OCI-LY7 (cell line): ENCODE measurements at regions of chr20 and their contacts with region 1.

Region 1: GRCh38 chr20:9978397-9979004 is 56.3 kb upstream of the ANKEF1 start:
- DNase-seq: peak; percentile 72
- H3K4me3 ChIP-seq: no peak overlapping the region
- H3K27ac ChIP-seq: no peak overlapping the region
- H3K4me1 ChIP-seq: no peaks in the 10 kb centered on the region
- CTCF ChIP-seq: peak; percentile 89

Region 2: DNA sequence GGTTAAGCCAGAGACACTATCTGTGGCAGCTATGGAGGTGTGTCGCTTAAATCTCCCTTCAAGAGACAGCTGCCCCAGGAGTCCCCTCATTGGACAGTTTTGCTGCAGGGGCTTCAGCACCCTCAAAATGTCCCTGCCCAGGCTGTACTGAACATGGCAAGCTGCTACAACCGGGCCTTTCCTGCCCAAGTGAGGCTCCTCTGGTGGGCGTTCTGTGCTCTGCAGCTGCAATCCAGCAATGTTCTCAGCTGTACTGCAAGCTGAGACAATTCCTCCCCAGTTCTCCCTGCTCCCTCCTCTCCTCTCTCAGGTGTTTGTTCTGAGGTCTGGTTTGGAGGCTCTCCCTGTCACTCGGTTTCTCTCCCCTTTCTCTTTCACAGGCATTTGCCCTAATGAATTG is 654.9 kb before region 1 on chr20:
- CTCF ChIA-PET with region 1: no interaction called
- POLR2A ChIA-PET with region 1: no interaction called
- intact Hi-C with region 1: no loop called
- DNase-seq: peak; percentile 1
- H3K4me3 ChIP-seq: no peak overlapping the region
- H3K27ac ChIP-seq: no peak overlapping the region
- H3K4me1 ChIP-seq: no peaks in the 10 kb centered on the region
- CTCF ChIP-seq: 0 out of 2 replicates have a peak, but pooled peaks have one; percentile 24

Region 3: DNA sequence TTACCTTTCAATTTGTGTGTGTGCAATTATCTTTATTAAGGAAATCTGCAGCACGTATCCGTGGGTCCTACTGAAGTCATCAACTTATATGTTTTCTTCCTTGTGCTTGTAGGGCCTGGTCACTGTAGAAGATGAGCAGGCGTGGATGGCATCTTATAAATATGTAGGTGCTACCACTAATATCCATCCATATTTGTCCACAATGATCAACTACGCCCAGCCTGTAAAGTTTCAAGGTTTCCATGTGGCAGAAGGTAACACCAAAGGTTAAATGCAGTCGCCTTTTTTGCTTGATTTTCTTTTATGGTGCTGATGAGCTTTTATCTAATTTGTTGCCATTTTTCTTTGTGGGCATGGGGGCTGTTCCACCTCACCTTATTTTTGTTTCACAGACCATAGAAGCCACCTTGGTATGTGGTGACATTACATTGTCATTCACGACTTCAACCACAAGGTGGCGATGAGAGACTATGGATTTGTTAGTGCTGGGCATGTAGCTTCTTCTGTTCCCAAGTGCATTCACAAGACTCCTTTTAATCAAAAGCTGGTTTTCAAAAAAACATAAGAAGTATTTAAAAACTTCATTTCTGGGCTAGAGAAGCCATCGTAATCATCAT is 570.6 kb before region 1 on chr20:
- CTCF ChIA-PET with region 1: no interaction called
- POLR2A ChIA-PET with region 1: interaction called, 3 read pairs
- intact Hi-C with region 1: loop called (anchors 10 kb)
- DNase-seq: peak; percentile 61
- H3K4me3 ChIP-seq: no peak overlapping the region
- H3K27ac ChIP-seq: no peak overlapping the region
- H3K4me1 ChIP-seq: no peaks in the 10 kb centered on the region
- CTCF ChIP-seq: peak; percentile 95

Region 4: GRCh38 chr20:10090588-10091166 is 112.2 kb after region 1 on chr20:
- CTCF ChIA-PET with region 1: interaction called, 3 read pairs
- POLR2A ChIA-PET with region 1: interaction called, 3 read pairs
- intact Hi-C with region 1: loop called (anchors 1 kb)
- DNase-seq: peak; percentile 49
- H3K4me3 ChIP-seq: no peak overlapping the region
- H3K27ac ChIP-seq: no peak overlapping the region
- H3K4me1 ChIP-seq: no peaks in the 10 kb centered on the region
- CTCF ChIP-seq: peak; percentile 82

Region 5: DNA sequence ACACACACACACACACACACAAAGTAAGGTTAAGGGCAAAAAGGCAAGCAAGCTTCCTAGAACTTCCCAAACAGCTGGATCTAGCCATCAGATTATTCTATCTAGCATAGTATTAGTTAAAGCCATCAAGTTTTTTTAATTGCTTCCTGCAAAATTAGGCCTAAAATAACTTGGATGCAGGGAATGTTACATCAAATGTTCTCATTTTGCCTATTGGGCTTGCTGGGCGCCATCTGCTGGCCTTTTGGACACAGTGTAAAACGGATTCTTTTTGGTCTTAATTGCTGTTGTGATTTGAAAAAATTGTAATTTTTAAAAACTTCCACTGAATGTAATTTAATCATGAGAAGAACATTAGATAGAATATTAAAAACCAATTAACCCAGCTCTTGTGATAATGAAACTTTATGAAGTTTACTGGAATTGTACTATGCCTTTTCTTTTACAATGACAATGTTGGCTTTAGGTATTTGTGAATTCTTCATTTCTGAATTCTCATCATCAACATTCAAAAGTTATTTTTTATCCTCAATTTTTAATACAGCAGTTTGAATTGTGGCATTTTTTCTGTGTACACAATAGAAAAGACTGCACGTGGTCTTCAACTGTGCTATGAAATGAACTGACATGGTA is 448.7 kb after region 1 on chr20:
- CTCF ChIA-PET with region 1: interaction called, 3 read pairs
- POLR2A ChIA-PET with region 1: interaction called, 5 read pairs
- intact Hi-C with region 1: loop called (anchors 1 kb)
- DNase-seq: peak; percentile 52
- H3K4me3 ChIP-seq: no peak overlapping the region
- H3K27ac ChIP-seq: no peak overlapping the region
- H3K4me1 ChIP-seq: no peaks in the 10 kb centered on the region
- CTCF ChIP-seq: peak; percentile 98

Region 6: GRCh38 chr20:11544029-11544678 is 1565.7 kb after region 1 on chr20:
- CTCF ChIA-PET with region 1: no interaction called
- POLR2A ChIA-PET with region 1: no interaction called
- intact Hi-C with region 1: loop called (anchors 5 kb)
- DNase-seq: peak; percentile 41
- H3K4me3 ChIP-seq: no peak overlapping the region
- H3K27ac ChIP-seq: no peak overlapping the region
- H3K4me1 ChIP-seq: no peaks in the 10 kb centered on the region
- CTCF ChIP-seq: peak; percentile 73